ENCODE measurements at regions of chr16 and their contacts with region 1.

Region 1: DNA sequence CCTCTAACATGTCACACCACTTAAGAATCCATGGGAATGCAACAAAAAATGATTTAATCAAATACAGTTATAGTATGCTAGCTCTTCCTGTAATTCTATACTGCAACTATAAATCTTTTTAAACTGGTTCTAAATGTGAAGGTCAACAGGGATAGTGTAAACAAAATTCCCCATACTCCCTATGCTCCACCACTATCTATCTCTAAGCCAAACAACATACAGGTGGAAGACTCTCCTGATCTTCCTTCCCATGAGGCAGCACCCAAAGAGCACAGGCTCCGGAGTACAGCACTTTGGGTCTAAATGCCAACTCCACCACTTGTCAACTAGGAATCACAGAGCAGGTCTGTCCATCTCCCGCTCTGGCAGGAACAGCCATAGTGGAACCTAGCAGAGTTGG is 4.3 kb downstream of the XPO6 start:
- DNase-seq: no peak
- ATAC-seq: no peak

Region 2: GRCh38 chr16:28258567-28258966 is 51.1 kb after region 1 on chr16:
- intact Hi-C with region 1: loop called (anchors 2 kb)
- DNase-seq: peak; percentile 82
- ATAC-seq: peak; percentile 67

Region 3: DNA sequence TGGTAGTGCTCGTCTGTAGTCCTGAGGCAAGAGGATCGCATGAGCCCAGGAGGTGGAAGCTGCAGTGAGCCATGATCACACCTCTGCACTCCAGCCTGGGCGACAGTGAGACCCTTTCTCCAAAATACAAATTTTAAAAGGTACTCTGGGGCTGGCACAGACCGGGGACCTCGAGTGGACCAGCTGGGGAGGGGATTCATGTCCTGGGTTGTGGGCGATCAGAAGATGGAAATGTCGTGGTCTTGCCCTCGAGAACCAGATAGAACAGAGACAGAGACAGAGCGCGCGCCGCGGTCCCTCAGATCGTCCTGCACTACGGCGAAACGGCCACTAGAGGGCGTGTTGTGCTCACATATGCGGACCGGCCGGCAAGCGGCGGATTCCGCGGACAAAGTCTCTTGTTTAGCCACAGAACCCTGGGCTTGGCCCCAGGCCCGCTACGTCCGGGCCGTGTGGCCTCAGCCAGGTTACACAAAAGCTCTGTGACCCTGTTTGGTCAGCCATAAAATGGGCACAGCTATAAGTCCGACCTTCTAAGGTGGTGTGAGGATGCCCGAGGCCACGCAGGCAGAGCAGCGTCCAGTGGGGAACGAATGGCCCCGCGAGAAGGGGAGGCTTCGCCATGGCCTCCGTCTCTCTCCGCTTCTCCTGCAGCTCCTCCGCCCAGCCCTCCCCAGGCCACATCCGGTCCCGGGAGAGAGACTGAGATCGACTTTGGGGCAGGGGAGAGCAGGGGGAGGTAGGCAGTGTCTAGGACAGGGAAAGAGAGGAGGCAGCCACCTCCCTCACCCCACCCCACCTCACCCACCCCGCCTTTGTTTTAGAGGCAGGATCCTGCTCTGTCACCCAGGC is 70.3 kb after region 1 on chr16:
- intact Hi-C with region 1: no loop called
- DNase-seq: peak; percentile 96
- ATAC-seq: peak; percentile 90

Measured in Right ventricle myocardium inferior (tissue), 1 donor.